T-cell (primary cell): ENCODE measurements at regions of chr1 and their contacts with region 1.

Region 1: DNA sequence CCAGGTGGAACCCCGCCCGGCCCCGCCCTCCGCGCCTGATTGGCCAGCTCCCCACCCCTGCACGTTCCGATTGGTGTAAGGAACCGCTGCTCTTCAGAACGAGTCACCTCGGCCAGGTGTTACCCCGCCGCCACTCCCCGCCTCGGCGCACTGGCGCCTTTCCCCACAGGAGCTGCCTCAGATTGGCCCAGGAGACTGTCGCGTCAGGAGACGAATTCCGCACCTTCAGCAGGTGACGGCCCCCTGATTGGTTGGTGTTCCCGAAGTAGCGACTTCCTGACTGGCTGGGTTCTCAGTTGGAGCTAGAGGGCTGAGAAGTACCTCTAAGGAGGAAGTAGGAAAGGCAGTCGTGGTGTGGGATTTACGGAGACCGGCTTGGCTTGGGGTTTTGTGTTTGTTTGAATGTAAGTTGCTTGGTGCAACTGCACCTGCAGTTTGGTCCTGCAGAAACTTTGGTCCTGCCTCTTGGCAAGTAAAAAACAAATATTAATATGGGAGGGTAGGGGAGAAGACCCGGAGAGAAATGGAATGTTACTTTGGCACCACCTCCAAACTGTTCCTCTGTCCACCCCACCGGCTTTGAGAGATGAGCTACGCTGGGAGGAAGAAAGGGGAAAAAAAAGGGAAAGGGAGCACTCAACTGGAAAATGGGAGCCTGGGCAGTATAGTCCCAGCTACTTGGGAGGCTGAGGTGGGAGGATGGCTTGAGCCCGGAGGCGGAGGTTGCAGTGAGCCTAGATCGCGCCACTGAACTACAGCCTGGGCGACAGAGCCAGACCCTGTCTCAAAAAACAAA is 411 bp upstream of the F11R start:
- DNase-seq: peak; percentile 72 to 94 (median 91)
- ATAC-seq: peak; percentile 94 to 97 (median 95)
- H3K4me3 ChIP-seq: peak overlapping the region; percentile 74 to 83
- H3K4me3 Mint-ChIP-seq: peak overlapping the region; percentile 92 to 94 (median 94)
- H3K27ac ChIP-seq: peak overlapping the region; percentile 64
- H3K27ac Mint-ChIP-seq: peak overlapping the region; percentile 82 to 93
- H3K4me1 ChIP-seq: peaks cover 10 to 19% of the 10 kb centered on the region in 2 experiments
- H3K4me1 Mint-ChIP-seq: peaks cover 29 to 49% (median 40%) of the 10 kb centered on the region in 3 donors
- H3K27me3 ChIP-seq: no peaks in the 10 kb centered on the region
- H3K27me3 Mint-ChIP-seq: no peaks in the 10 kb centered on the region

Region 2: GRCh38 chr1:160639652-160640051 is 381.7 kb before region 1 on chr1:
- CTCF ChIA-PET with region 1: no interaction called
- POLR2A ChIA-PET with region 1: interaction called in 1 of 2 experiments, 12 read pairs
- DNase-seq: peak in 1 of 35 experiments; percentile 56
- ATAC-seq: no peak
- H3K4me3 ChIP-seq: peak overlapping the region in 1 of 2 donors; percentile 1
- H3K4me3 Mint-ChIP-seq: peak overlapping the region; percentile 70 to 98 (median 75)
- H3K27ac ChIP-seq: peak overlapping the region; percentile 90
- H3K27ac Mint-ChIP-seq: peak overlapping the region; percentile 96 to 98
- H3K4me1 ChIP-seq: peaks cover 70 to 73% of the 10 kb centered on the region in 2 experiments
- H3K4me1 Mint-ChIP-seq: peaks cover 94 to 97% (median 94%) of the 10 kb centered on the region in 3 donors
- H3K27me3 ChIP-seq: no peaks in the 10 kb centered on the region
- H3K27me3 Mint-ChIP-seq: no peaks in the 10 kb centered on the region

Region 3: DNA sequence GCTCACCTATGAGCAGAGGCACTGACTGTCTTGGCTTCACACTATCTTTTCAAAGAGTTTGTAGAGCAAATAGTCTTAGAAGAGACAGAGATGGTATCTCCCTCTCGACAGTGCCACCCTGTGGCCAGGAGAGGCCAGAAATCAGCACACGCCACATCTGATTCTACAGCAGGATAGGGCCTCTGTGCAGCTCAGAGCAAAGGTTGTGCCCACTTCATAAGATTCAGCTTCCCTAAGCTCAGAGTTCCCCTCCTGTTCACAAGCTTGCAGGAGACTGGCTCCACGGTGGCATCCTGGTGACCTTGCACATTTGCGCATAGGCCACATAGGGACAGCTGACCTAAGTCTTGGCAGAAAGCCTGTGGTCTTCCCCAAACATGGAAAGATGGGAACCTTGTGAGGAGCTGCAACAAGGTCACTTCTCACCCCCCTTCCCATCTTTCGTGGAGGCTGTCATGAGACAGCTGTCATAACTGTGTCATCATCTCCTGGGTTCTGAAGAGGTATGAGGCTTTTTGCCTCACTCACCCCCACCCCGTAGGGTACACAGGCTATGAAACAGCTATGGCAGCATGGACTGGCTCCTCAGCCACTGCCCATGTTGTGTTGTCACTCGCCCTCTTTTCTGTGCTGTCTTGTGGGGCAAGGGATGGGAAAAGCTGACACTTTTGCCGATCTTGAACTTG is 69.8 kb before region 1 on chr1:
- CTCF ChIA-PET with region 1: no interaction called
- POLR2A ChIA-PET with region 1: no interaction called
- DNase-seq: peak; percentile 45 to 82 (median 68)
- ATAC-seq: peak; percentile 77 to 93 (median 88)
- H3K4me3 ChIP-seq: no peak overlapping the region
- H3K4me3 Mint-ChIP-seq: no peak overlapping the region
- H3K27ac ChIP-seq: no peak overlapping the region
- H3K27ac Mint-ChIP-seq: no peak overlapping the region
- H3K4me1 ChIP-seq: peaks cover 0 to 18% of the 10 kb centered on the region in 2 experiments
- H3K4me1 Mint-ChIP-seq: peaks cover 9 to 12% (median 10%) of the 10 kb centered on the region in 3 donors
- H3K27me3 ChIP-seq: no peaks in the 10 kb centered on the region
- H3K27me3 Mint-ChIP-seq: no peaks in the 10 kb centered on the region

Region 4: GRCh38 chr1:161038523-161039153 is 17.3 kb after region 1 on chr1 and contains the start of gene TSTD1:
- CTCF ChIA-PET with region 1: interaction called, 3 to 10 read pairs
- POLR2A ChIA-PET with region 1: interaction called, 7 to 12 read pairs
- DNase-seq: peak; percentile 77 to 94 (median 87)
- ATAC-seq: peak; percentile 87 to 94 (median 92)
- H3K4me3 ChIP-seq: peak within 1 kb of the TSS; percentile 70 to 95
- H3K4me3 Mint-ChIP-seq: peak within 1 kb of the TSS; percentile 88 to 90 (median 89)
- H3K27ac ChIP-seq: peak within 1 kb of the TSS; percentile 76
- H3K27ac Mint-ChIP-seq: peak within 1 kb of the TSS; percentile 95
- H3K4me1 ChIP-seq: peaks cover 16 to 42% of the 10 kb centered on the region in 2 experiments
- H3K4me1 Mint-ChIP-seq: peaks cover 40 to 51% (median 51%) of the 10 kb centered on the region in 3 donors
- H3K27me3 ChIP-seq: no peaks in the 10 kb centered on the region
- H3K27me3 Mint-ChIP-seq: no peaks in the 10 kb centered on the region
- total RNA-seq, gene TSTD1: 39.9 to 130 (median 94.8) TPM